ENCODE measurements at regions of chr3 and their contacts with region 1.

Region 1: GRCh38 chr3:116770815-116771450 is 61.4 kb downstream of the TUSC7 start:
- DNase-seq: peak; percentile 70
- ATAC-seq: peak; percentile 73
- H3K4me3 Mint-ChIP-seq: no peak overlapping the region
- H3K27ac Mint-ChIP-seq: no peak overlapping the region
- H3K4me1 Mint-ChIP-seq: no peaks in the 10 kb centered on the region
- H3K27me3 Mint-ChIP-seq: peaks cover 5% of the 10 kb centered on the region

Region 2: DNA sequence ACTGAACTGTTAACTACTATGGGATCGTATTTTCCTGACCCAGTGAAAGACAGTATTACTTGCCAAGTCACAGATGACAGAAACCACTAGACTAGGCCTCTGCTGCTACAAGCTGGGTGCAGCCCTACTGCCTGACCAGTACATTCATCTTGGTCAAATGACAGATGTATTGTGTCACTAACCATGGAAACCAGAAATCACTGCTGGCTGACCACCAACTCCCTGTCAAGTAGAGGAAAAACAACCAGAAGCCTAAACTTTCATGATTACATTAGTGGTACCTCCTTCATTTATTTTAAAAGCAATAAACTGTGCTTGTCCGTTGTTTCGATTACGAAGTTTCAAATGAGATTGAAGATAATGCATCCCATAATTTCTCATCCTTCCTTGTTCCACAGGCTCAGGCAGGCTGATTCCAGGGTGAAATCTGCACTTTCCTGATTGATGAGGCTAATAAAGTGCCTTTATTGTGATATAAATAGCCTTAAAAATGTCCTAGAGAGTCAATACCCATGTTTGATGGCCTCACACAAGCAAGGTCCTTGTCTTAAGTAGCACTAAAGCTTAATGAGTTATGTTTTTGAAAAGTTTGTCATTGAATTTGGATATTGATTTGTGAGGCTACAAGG is 635.4 kb before region 1 on chr3:
- CTCF ChIA-PET with region 1: no interaction called
- POLR2A ChIA-PET with region 1: no interaction called
- intact Hi-C with region 1: no loop called
- DNase-seq: no peak
- ATAC-seq: no peak
- H3K4me3 Mint-ChIP-seq: no peak overlapping the region
- H3K27ac Mint-ChIP-seq: no peak overlapping the region
- H3K4me1 Mint-ChIP-seq: no peaks in the 10 kb centered on the region
- H3K27me3 Mint-ChIP-seq: no peaks in the 10 kb centered on the region

Region 3: GRCh38 chr3:117526470-117527079 is 755.6 kb after region 1 on chr3:
- CTCF ChIA-PET with region 1: no interaction called
- POLR2A ChIA-PET with region 1: no interaction called
- intact Hi-C with region 1: loop called (anchors 1 to 10 kb)
- DNase-seq: peak; percentile 11
- ATAC-seq: no peak
- H3K4me3 Mint-ChIP-seq: no peak overlapping the region
- H3K27ac Mint-ChIP-seq: no peak overlapping the region
- H3K4me1 Mint-ChIP-seq: no peaks in the 10 kb centered on the region
- H3K27me3 Mint-ChIP-seq: no peaks in the 10 kb centered on the region

Region 4: GRCh38 chr3:117719316-117719926 is 948.5 kb after region 1 on chr3:
- CTCF ChIA-PET with region 1: no interaction called
- POLR2A ChIA-PET with region 1: no interaction called
- intact Hi-C with region 1: loop called (anchors 2 kb)
- DNase-seq: peak; percentile 4
- ATAC-seq: no peak
- H3K4me3 Mint-ChIP-seq: no peak overlapping the region
- H3K27ac Mint-ChIP-seq: no peak overlapping the region
- H3K4me1 Mint-ChIP-seq: no peaks in the 10 kb centered on the region
- H3K27me3 Mint-ChIP-seq: no peaks in the 10 kb centered on the region

Region 5: GRCh38 chr3:117997201-117998049 is 1226.5 kb after region 1 on chr3:
- CTCF ChIA-PET with region 1: interaction called, 5 read pairs
- POLR2A ChIA-PET with region 1: no interaction called
- intact Hi-C with region 1: loop called in 1 of 2 experiments (anchors 1 kb)
- DNase-seq: peak; percentile 75
- ATAC-seq: peak; percentile 88
- H3K4me3 Mint-ChIP-seq: no peak overlapping the region
- H3K27ac Mint-ChIP-seq: no peak overlapping the region
- H3K4me1 Mint-ChIP-seq: no peaks in the 10 kb centered on the region
- H3K27me3 Mint-ChIP-seq: peaks cover 3% of the 10 kb centered on the region

Region 6: DNA sequence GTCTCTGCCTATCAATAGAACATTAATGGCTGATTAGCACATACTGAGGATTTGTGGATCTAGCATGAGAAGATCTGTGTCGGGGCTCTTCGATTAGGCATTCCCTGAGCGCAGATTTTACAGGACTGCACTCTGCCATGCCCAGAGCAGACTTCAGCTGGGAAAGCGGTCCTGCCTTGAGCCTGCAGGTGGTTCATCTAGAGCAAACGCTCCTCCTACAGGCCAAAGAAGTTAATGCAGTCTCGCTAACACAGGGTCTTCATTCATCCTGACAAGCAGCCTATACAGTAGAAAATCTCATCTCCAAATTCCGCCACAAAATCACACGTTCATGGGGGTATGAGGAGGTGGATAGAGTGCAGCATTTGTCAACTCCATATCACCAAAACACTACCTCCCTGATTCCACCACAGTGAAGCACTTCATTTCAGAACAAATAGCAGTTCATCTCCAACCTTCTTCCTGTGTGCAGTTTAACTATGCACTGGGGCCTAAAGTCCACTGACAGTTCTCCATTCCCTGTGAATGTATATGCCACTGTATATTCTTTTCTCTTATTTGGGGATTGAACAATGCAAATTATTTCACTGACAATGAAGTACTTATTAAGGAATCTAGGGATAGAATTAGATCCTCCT is 1857.9 kb after region 1 on chr3:
- CTCF ChIA-PET with region 1: no interaction called
- POLR2A ChIA-PET with region 1: no interaction called
- intact Hi-C with region 1: loop called in 1 of 2 experiments (anchors 10 kb)
- DNase-seq: peak; percentile 53
- ATAC-seq: peak; percentile 51
- H3K4me3 Mint-ChIP-seq: no peak overlapping the region
- H3K27ac Mint-ChIP-seq: no peak overlapping the region
- H3K4me1 Mint-ChIP-seq: no peaks in the 10 kb centered on the region
- H3K27me3 Mint-ChIP-seq: no peaks in the 10 kb centered on the region

Measured in activated CD4-positive, alpha-beta T cell treated with anti-CD3 and anti-CD28 coated beads for 36 hours (primary cell).